ENCODE measurements at regions of chr3 and their contacts with region 1.

Region 1: GRCh38 chr3:30012941-30013543 is 593.4 kb upstream of the TGFBR2 start:
- DNase-seq: peak; percentile 63
- ATAC-seq: no peak
- H3K4me3 Mint-ChIP-seq: no peak overlapping the region
- H3K27ac Mint-ChIP-seq: no peak overlapping the region
- H3K4me1 Mint-ChIP-seq: no peaks in the 10 kb centered on the region
- H3K27me3 Mint-ChIP-seq: peaks cover 4% of the 10 kb centered on the region

Region 2: DNA sequence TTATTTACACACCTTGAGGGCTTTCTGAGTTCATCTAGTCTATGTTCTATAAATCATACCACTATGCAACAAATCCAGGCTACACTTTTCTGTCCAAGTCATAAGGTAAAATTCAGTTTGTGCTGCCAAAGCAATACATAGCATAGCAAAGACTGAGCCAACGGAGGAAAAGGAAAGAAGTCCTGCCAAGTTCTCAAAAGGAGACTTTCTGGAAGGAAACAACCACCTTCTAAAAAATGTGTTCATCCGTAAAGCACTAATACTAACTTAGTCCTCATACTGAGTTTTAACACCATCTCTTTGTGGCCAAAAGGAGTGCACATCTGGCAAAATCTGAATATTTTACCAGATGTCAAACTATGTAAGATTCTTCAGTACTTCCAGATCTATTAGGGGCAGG is 111.9 kb before region 1 on chr3:
- CTCF ChIA-PET with region 1: no interaction called
- POLR2A ChIA-PET with region 1: no interaction called
- DNase-seq: no peak
- ATAC-seq: no peak
- H3K4me3 Mint-ChIP-seq: no peak overlapping the region
- H3K27ac Mint-ChIP-seq: no peak overlapping the region
- H3K4me1 Mint-ChIP-seq: no peaks in the 10 kb centered on the region
- H3K27me3 Mint-ChIP-seq: no peaks in the 10 kb centered on the region

Region 3: DNA sequence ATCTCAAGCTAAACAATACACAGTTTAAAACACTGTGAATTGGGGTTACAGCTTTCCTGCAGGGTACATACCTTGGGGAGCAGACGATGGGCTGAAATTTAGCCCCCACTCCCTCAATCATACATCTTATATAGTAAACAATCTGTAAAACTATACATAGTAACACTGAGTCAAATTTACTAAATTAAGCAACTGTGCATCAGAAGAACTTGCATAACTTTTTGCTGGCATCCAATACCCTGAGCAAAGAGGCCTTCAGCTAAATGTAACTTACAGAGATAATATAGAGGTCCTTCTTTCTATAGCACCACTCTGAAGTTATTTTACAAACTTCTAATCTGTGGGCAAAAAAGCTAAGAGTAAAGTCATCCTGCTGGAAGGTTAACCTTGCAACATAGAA is 10.2 kb before region 1 on chr3:
- CTCF ChIA-PET with region 1: interaction called, 11 read pairs
- POLR2A ChIA-PET with region 1: no interaction called
- DNase-seq: no peak
- ATAC-seq: no peak
- H3K4me3 Mint-ChIP-seq: no peak overlapping the region
- H3K27ac Mint-ChIP-seq: no peak overlapping the region
- H3K4me1 Mint-ChIP-seq: peaks cover 3% of the 10 kb centered on the region
- H3K27me3 Mint-ChIP-seq: no peaks in the 10 kb centered on the region

Region 4: DNA sequence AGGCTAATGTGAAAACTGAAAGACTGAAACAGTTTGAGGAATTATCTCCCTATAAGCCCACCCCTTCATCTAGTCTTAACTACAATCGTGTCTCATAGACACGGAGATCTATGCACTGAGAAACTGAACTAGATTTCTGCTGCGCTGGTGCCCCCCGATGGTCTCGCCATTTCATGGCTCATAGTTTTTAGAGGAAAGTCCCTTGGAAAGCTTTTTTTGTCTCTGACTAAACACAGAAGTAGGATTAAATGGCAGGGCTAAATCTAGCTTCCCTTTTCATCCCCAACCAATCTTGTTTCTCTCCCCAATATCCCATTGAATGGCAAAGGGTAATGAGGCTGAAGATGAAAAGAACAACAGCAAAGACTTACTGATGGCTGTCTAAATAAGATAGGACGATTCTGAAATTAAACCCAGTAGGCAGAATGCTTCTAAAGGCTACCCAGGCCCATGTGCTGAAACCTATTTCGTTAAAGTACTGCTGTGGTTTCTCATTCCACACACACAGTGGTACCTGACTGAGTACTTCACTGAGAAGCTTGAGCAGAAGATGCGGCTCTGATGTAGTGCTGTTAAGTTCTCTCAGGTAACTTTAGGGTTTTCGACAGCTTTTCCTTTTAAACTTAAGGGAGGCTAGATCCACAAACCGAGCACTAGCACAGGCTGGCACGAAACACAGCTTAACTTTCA is 738.7 kb after region 1 on chr3:
- CTCF ChIA-PET with region 1: interaction called, 13 read pairs
- POLR2A ChIA-PET with region 1: no interaction called
- DNase-seq: peak; percentile 70
- ATAC-seq: peak; percentile 79
- H3K4me3 Mint-ChIP-seq: no peak overlapping the region
- H3K27ac Mint-ChIP-seq: no peak overlapping the region
- H3K4me1 Mint-ChIP-seq: peaks cover 13% of the 10 kb centered on the region
- H3K27me3 Mint-ChIP-seq: no peaks in the 10 kb centered on the region

Measured in activated CD8-positive, alpha-beta T cell treated with anti-CD3 and anti-CD28 coated beads, Interleukin-2, amount 10 ng/mL, durations not matched to agents 7 days and 5 days (primary cell).